PC-3 (cell line): ENCODE measurements at regions of chr21 and their contacts with region 1.

Region 1: GRCh38 chr21:32114419-32115035 is 164.3 kb downstream of the MIS18A start:
- DNase-seq: no peak
- ATAC-seq: no peak
- H3K4me3 ChIP-seq: no peak overlapping the region
- H3K27ac ChIP-seq: no peak overlapping the region
- H3K4me1 ChIP-seq: no peaks in the 10 kb centered on the region
- H3K27me3 ChIP-seq: peaks cover 69% of the 10 kb centered on the region
- CTCF ChIP-seq: no peak

Region 2: GRCh38 chr21:32090956-32091355 is 23.6 kb before region 1 on chr21:
- CTCF ChIA-PET with region 1: no interaction called
- POLR2A ChIA-PET with region 1: interaction called, 42 read pairs
- intact Hi-C with region 1: no loop called
- DNase-seq: no peak
- ATAC-seq: no peak
- H3K4me3 ChIP-seq: no peak overlapping the region
- H3K27ac ChIP-seq: no peak overlapping the region
- H3K4me1 ChIP-seq: no peaks in the 10 kb centered on the region
- H3K27me3 ChIP-seq: peaks cover 8% of the 10 kb centered on the region; the same call in 1 of the 2 replicates
- CTCF ChIP-seq: no peak

Region 3: DNA sequence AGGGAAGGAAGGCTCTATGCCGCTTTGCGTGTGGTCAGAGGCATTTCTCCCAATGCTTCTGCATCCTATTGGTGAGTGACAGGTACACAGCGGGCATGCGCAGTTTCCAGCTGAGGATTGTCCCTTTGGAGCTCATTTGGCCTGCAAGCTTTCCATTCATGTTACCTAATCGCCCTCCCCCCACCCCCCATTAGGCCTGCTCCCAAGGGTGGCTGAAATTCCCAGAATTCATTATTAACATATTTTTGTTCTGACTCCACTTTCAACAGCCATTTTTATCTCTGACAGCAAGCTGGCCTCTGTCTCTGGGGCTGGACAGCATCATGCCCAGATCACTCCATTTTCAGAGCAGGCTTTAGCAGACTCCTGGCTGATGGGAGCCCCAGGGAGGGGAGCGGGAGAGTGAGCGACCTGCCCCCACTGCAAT is 138.7 kb after region 1 on chr21:
- CTCF ChIA-PET with region 1: no interaction called
- POLR2A ChIA-PET with region 1: no interaction called
- intact Hi-C with region 1: no loop called
- DNase-seq: no peak
- ATAC-seq: no peak
- H3K4me3 ChIP-seq: no peak overlapping the region
- H3K27ac ChIP-seq: no peak overlapping the region
- H3K4me1 ChIP-seq: peaks cover 14% of the 10 kb centered on the region
- H3K27me3 ChIP-seq: peaks cover 56% of the 10 kb centered on the region
- CTCF ChIP-seq: no peak